ENCODE measurements at regions of chr7 and their contacts with region 1.

Region 1: DNA sequence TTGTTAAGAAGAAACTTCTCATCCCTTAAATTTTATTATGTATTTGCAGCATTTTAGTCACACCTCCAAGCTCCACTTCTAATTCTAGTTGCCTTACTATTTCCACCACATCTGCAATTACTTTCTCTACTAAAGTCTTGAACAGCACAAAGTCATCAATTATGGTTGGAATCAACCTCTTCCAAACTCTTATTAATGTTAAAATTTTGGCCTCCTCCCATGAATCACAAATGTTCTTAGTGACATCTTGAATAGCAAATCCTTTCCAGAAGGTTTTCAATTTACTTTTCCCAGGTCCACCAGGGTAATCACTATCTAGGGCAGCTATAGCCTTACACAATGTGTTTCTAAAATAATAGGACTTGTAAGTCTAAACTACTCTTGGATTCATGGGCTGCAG is 126.3 kb upstream of the POM121L12 start:
- DNase-seq: no peak
- H3K4me3 ChIP-seq: no peak overlapping the region
- H3K27ac ChIP-seq: no peak overlapping the region
- H3K4me1 ChIP-seq: no peaks in the 10 kb centered on the region
- H3K27me3 ChIP-seq: no peaks in the 10 kb centered on the region
- CTCF ChIP-seq: no peak
- POLR2A ChIP-seq: no peak

Region 2: DNA sequence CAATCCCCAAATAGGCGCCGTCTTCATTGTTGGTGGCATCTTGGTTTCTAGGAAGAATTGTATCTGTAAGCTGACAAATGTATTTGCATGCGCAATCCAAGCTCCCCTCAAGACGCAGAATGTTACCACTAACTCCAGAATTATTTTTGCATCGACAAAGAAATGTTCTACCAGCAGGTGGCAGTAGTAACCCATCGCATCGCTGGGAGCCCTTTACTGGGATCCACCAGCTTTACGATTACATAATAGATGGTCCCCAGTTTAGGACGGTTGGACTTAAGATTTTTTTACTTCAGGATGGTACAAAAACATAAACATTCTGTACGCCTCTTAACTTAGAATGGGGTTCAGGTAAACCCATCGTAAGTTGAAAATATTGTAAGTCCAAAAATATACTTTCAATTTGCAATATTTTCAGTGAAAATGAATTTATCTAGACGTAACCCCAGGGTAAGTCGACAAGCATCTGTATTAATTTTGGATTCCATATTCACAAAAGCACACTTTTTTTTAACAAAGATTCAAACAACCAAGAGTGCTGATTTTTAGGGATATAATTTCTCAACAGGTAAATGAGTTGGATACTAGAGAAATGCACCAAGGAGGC is 1478.5 kb before region 1 on chr7:
- CTCF ChIA-PET with region 1: no interaction called
- POLR2A ChIA-PET with region 1: no interaction called
- dilution Hi-C with region 1: no loop called
- intact Hi-C with region 1: loop called (anchors 10 kb)
- DNase-seq: peak; percentile 52
- H3K4me3 ChIP-seq: no peak overlapping the region
- H3K27ac ChIP-seq: no peak overlapping the region
- H3K4me1 ChIP-seq: no peaks in the 10 kb centered on the region
- H3K27me3 ChIP-seq: no peaks in the 10 kb centered on the region
- CTCF ChIP-seq: peak; percentile 48 to 59
- POLR2A ChIP-seq: no peak

Region 3: GRCh38 chr7:52119537-52119936 is 789.6 kb before region 1 on chr7:
- CTCF ChIA-PET with region 1: no interaction called
- POLR2A ChIA-PET with region 1: no interaction called
- dilution Hi-C with region 1: no loop called
- intact Hi-C with region 1: no loop called
- DNase-seq: peak; percentile 12
- H3K4me3 ChIP-seq: no peak overlapping the region
- H3K27ac ChIP-seq: no peak overlapping the region
- H3K4me1 ChIP-seq: peaks cover 3% of the 10 kb centered on the region
- H3K27me3 ChIP-seq: no peaks in the 10 kb centered on the region
- CTCF ChIP-seq: no peak
- POLR2A ChIP-seq: no peak

Region 4: GRCh38 chr7:52726988-52727387 is 182.1 kb before region 1 on chr7:
- CTCF ChIA-PET with region 1: no interaction called
- POLR2A ChIA-PET with region 1: no interaction called
- dilution Hi-C with region 1: no loop called
- intact Hi-C with region 1: no loop called
- DNase-seq: no peak
- H3K4me3 ChIP-seq: no peak overlapping the region
- H3K27ac ChIP-seq: no peak overlapping the region
- H3K4me1 ChIP-seq: peaks cover 10% of the 10 kb centered on the region
- H3K27me3 ChIP-seq: no peaks in the 10 kb centered on the region
- CTCF ChIP-seq: no peak
- POLR2A ChIP-seq: no peak